A549 (cell line): ENCODE measurements at regions of chr11 and their contacts with region 1.

Region 1: DNA sequence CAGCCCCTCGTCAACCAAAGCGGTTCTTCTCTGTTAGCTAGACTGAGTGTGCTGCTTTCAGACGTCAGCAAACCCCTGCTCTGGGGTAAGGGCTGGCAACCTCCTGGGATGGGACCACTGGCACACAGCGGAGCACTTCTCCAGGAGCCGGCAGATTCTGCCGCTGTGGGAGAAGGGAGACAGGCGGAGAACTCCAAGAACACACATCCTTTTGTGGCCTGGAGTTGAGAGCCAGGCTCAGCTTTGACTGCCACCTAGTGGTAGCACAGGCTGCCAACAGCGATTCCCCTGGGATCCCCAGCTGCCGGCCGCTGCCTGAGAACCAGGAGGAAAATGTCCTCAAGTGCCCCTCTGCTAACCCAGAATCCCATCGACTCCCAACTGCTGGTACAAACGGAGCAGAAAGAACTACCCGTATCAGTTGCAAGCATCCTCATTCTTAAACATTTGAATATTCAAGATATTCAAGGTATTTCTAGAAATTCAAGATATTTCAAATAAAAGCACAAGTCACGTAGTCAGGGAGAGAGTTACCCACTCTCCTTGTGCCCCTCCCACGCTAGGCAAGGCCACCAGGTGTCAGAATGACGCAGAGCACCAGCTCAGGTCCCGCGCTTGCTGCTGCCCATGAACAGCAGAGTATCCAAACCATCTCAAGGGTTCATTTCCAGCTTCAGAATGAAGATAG is 4.9 kb downstream of the LTO1 start:
- DNase-seq: peak; percentile 87 to 90
- ATAC-seq: peak; percentile 80 to 81
- H3K4me3 ChIP-seq: no peak overlapping the region
- H3K27ac ChIP-seq: peak overlapping the region; percentile 49 to 72; a peak in 4 of 6 replicates
- H3K4me1 ChIP-seq: peaks cover 24% of the 10 kb centered on the region
- CTCF ChIP-seq: peak; percentile 93
- EP300 ChIP-seq: no peak
- POLR2A ChIP-seq: no peak
- RAD21 ChIP-seq: peak; percentile 92

Region 2: GRCh38 chr11:69115586-69116560 is 554.4 kb before region 1 on chr11:
- CTCF ChIA-PET with region 1: interaction called, 15 read pairs
- POLR2A ChIA-PET with region 1: no interaction called
- DNase-seq: peak in 1 of 2 experiments; percentile 35
- ATAC-seq: peak; percentile 31 to 34; a peak in 3 of 6 replicates
- H3K4me3 ChIP-seq: no peak overlapping the region
- H3K27ac ChIP-seq: peak overlapping the region; percentile 65 to 74
- H3K4me1 ChIP-seq: peaks cover 17% of the 10 kb centered on the region
- CTCF ChIP-seq: no peak
- EP300 ChIP-seq: no peak
- POLR2A ChIP-seq: no peak
- RAD21 ChIP-seq: no peak

Region 3: GRCh38 chr11:69603111-69603836 is 67.0 kb before region 1 on chr11:
- CTCF ChIA-PET with region 1: no interaction called
- POLR2A ChIA-PET with region 1: no interaction called
- DNase-seq: no peak
- ATAC-seq: no peak
- H3K4me3 ChIP-seq: no peak overlapping the region
- H3K27ac ChIP-seq: no peak overlapping the region
- H3K4me1 ChIP-seq: no peaks in the 10 kb centered on the region
- CTCF ChIP-seq: no peak
- EP300 ChIP-seq: no peak
- POLR2A ChIP-seq: no peak
- RAD21 ChIP-seq: no peak

Region 4: GRCh38 chr11:69654569-69655327 is 15.6 kb before region 1 on chr11:
- CTCF ChIA-PET with region 1: interaction called, 149 read pairs
- POLR2A ChIA-PET with region 1: interaction called, 3 read pairs
- DNase-seq: peak; percentile 88 to 95
- ATAC-seq: peak; percentile 66 to 75
- H3K4me3 ChIP-seq: peak overlapping the region; percentile 33
- H3K27ac ChIP-seq: peak overlapping the region; percentile 87 to 90
- H3K4me1 ChIP-seq: peaks cover 64% of the 10 kb centered on the region
- CTCF ChIP-seq: no peak
- EP300 ChIP-seq: peak; percentile 85 to 90; a peak in 4 of 5 replicates
- POLR2A ChIP-seq: no peak; the same call in 1 of the 2 replicates
- RAD21 ChIP-seq: peak; percentile 40 to 49; a peak in 4 of 5 replicates

Region 5: DNA sequence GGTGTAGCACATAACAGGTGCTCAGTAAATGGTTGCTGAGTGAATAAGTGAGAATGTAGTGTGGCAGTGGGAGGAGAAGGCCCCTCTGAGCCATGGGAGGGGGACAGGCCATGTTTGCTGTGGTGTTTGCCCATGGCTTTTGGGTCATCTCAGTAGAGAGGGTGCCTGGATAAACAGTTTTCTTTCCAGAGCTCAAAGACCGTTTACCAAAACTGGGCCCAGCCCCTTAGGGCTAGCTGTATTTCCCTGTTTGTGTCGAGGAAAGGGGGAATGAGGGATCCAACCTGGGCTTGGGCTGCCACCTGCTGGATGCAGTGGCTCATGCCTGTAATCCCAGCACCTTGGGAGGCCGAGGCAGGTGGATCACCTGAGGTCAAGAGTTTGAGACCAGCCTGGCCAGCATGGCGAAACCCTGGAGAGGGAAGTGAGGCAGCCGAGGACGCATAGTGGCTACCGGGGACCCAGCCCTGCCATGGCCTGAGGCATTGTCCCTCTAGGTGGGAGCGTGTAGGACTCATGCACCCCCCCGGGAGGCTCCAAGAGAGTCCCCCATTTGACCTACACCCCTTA is 13.5 kb after region 1 on chr11:
- CTCF ChIA-PET with region 1: interaction called, 19 read pairs
- POLR2A ChIA-PET with region 1: interaction called, 3 read pairs
- DNase-seq: peak in 1 of 2 experiments; percentile 64
- ATAC-seq: peak in 1 of 2 experiments; percentile 75; a peak in 3 of 6 replicates
- H3K4me3 ChIP-seq: no peak overlapping the region
- H3K27ac ChIP-seq: no peak overlapping the region
- H3K4me1 ChIP-seq: peaks cover 12% of the 10 kb centered on the region; the same call in 2 of the 3 replicates
- CTCF ChIP-seq: peak; percentile 66
- EP300 ChIP-seq: no peak
- POLR2A ChIP-seq: no peak
- RAD21 ChIP-seq: peak; percentile 77 to 89

Region 6: DNA sequence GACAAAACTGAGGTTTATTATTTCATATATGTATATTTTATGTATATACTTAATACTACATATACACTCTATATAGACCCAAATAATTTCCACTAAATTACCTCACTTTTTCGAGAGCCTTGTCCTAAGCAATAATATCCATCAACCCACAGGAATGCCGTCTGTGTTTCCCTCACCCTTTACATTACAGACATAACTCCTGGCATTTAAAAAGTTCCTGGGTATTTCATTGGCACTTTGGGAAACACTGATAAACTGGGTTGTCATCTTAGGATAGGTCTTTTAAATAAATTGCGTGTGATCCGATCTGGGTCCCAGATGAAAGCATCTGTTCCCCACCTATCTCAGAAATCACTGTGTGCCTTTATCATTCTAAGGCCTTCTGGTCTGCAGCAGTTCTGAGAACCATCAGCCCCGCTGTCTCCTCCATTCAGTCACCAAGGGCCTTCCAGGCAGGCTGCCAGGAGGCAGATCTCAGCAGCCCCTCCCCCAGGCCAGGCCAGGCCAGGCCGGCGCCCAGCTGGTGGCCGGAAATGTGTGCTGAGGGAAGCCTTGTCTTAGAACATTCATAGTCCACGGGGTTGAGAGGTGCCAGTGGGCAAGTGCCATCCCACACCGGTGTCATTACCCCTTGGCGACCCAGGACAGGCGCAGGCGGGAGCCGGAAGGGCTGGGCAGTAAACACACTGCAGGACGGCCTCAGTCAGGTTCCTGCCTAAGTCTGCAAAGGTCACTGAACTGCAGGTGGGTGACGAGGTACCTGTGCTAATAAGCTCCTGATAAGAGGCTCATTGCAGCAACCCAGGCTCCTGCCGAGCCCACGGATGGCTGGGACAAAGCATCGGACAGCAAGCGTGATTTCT is 30.2 kb after region 1 on chr11:
- CTCF ChIA-PET with region 1: no interaction called
- POLR2A ChIA-PET with region 1: no interaction called
- DNase-seq: peak; percentile 38 to 59
- ATAC-seq: peak; percentile 52 to 66; a peak in 4 of 6 replicates
- H3K4me3 ChIP-seq: no peak overlapping the region
- H3K27ac ChIP-seq: peak overlapping the region; percentile 28 to 76; a peak in 4 of 6 replicates
- H3K4me1 ChIP-seq: peaks cover 14% of the 10 kb centered on the region
- CTCF ChIP-seq: no peak
- EP300 ChIP-seq: no peak
- POLR2A ChIP-seq: no peak
- RAD21 ChIP-seq: no peak

Region 7: GRCh38 chr11:70034740-70035365 is 364.6 kb after region 1 on chr11:
- CTCF ChIA-PET with region 1: no interaction called
- POLR2A ChIA-PET with region 1: no interaction called
- DNase-seq: no peak
- ATAC-seq: no peak; a peak in 2 of 6 replicates
- H3K4me3 ChIP-seq: no peak overlapping the region
- H3K27ac ChIP-seq: no peak overlapping the region
- H3K4me1 ChIP-seq: no peaks in the 10 kb centered on the region
- CTCF ChIP-seq: no peak
- EP300 ChIP-seq: no peak
- POLR2A ChIP-seq: no peak
- RAD21 ChIP-seq: no peak